ENCODE measurements at regions of chr16 and their contacts with region 1.

Region 1: DNA sequence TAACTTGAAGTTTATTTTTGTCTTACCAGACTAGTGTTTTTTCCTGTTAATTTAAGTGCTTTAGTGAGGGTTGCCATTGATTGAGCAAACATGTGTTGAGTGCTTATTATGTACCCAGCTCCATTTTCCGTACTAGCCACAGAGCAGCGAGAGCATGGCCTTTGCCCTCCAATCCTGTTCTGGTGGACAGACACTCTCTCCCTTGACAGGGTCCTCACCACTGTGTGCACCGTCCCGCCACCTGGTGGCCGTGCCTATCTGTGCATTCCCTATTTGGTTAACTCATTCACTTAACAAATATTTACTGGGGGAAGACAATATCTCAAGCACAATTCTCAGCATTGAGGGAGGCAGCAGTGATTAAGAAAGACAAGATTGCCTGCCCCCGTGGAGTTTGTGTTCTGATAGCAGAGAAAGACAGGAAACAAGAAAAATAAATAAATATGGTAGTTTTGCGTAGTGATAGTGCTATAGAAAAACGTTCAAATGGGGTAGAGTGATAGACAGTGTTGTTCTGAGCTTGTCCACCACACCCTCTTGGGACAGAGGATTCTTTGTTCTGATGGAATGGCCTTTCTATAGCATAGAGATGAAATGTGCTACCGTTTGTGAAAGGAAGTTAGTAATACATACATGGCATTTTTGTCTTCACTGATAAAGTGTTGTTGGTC is 13.0 kb downstream of the CDH13 start:
- DNase-seq: peak; percentile 54 to 77 (median 58)
- ATAC-seq: peak in 3 of 4 donors; percentile 62 to 72 (median 64)
- H3K4me3 ChIP-seq: no peak overlapping the region
- H3K27ac ChIP-seq: peak overlapping the region in 3 of 12 donors; percentile 1 to 62 (median 40)
- H3K4me1 ChIP-seq: peaks cover 0 to 61% (median 29%) of the 10 kb centered on the region in 12 donors
- H3K27me3 ChIP-seq: no peaks in the 10 kb centered on the region
- CTCF ChIP-seq: peak; percentile 59 to 86 (median 76)
- POLR2A ChIP-seq: no peak

Region 2: GRCh38 chr16:82300374-82300926 is 339.4 kb before region 1 on chr16:
- intact Hi-C with region 1: no loop called
- DNase-seq: no peak
- ATAC-seq: no peak
- H3K4me3 ChIP-seq: no peak overlapping the region
- H3K27ac ChIP-seq: no peak overlapping the region
- H3K4me1 ChIP-seq: peaks cover 0 to 17% (median 0%) of the 10 kb centered on the region in 12 donors
- H3K27me3 ChIP-seq: no peaks in the 10 kb centered on the region
- CTCF ChIP-seq: no peak
- POLR2A ChIP-seq: no peak

Region 3: DNA sequence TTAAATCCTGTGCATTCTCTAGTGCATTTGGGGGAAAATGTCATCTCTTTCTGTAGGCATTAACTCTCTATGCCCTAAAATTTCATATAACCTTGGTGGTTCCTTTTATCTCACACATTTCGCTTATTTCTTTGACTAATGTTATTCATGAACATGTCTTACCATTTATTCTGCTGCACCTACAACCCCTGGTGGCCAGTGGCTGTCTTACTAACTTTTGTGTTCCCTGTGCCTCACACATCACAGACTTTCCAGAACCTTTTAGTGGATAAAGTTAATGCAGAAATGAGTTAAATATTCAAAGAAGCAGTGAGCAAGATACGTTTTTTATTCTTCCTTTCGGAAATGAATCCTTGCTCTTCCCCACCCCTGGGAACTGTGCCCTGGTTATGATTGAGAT is 98.9 kb after region 1 on chr16:
- intact Hi-C with region 1: loop called in 4 of 10 experiments (anchors 2 to 10 kb)
- DNase-seq: peak in 1 of 5 donors; percentile 28
- ATAC-seq: no peak
- H3K4me3 ChIP-seq: no peak overlapping the region
- H3K27ac ChIP-seq: peak overlapping the region in 7 of 12 donors; percentile 22 to 90 (median 86)
- H3K4me1 ChIP-seq: peaks cover 8 to 51% (median 25%) of the 10 kb centered on the region in 12 donors
- H3K27me3 ChIP-seq: no peaks in the 10 kb centered on the region
- CTCF ChIP-seq: peak in 11 of 12 donors; percentile 15 to 56 (median 41)
- POLR2A ChIP-seq: no peak

Region 4: DNA sequence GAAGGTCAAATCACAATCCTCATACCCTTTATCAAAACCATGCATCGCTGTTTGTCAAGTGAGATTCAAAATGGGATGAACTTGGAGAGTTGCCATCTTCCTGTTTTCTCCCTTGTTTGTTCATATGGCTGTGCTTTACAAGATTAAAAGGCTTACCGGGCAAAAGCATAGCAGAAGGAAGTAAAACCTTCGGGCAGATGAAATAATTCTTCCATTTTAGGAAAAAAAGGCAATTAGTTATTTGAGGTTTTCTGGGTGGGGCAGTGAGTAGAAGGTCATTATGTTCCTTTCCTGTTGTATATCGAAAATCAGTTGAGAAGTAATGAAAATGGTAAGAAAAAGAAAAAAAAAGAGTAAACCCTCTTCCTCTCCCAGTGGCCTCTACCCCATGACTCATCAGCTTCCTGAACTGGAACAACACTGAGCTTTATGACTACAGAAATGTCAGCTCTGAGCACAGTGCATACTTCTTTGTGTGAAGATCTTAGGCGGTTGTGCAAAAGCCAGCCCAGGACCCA is 356.2 kb after region 1 on chr16:
- intact Hi-C with region 1: loop called in 1 of 10 experiments (anchors 10 kb)
- DNase-seq: peak in 2 of 5 donors; percentile 30 to 34
- ATAC-seq: peak in 3 of 4 donors; percentile 80 to 90 (median 86)
- H3K4me3 ChIP-seq: peak overlapping the region in 6 of 12 donors; percentile 9 to 31 (median 24)
- H3K27ac ChIP-seq: peak overlapping the region in 10 of 12 donors; percentile 2 to 78 (median 50)
- H3K4me1 ChIP-seq: peaks cover 0 to 17% (median 4%) of the 10 kb centered on the region in 12 donors
- H3K27me3 ChIP-seq: no peaks in the 10 kb centered on the region
- CTCF ChIP-seq: no peak
- POLR2A ChIP-seq: no peak

Region 5: GRCh38 chr16:83215406-83216001 is 575.7 kb after region 1 on chr16:
- intact Hi-C with region 1: loop called in 1 of 10 experiments (anchors 10 kb)
- DNase-seq: no peak
- ATAC-seq: no peak
- H3K4me3 ChIP-seq: no peak overlapping the region
- H3K27ac ChIP-seq: no peak overlapping the region
- H3K4me1 ChIP-seq: peaks cover 0 to 8% (median 0%) of the 10 kb centered on the region in 12 donors
- H3K27me3 ChIP-seq: no peaks in the 10 kb centered on the region
- CTCF ChIP-seq: peak; percentile 32 to 59 (median 49)
- POLR2A ChIP-seq: no peak

Region 6: GRCh38 chr16:83441517-83441916 is 801.7 kb after region 1 on chr16:
- intact Hi-C with region 1: loop called in 1 of 10 experiments (anchors 10 kb)
- DNase-seq: no peak
- ATAC-seq: peak in 2 of 4 donors; percentile 60 to 61
- H3K4me3 ChIP-seq: no peak overlapping the region
- H3K27ac ChIP-seq: no peak overlapping the region
- H3K4me1 ChIP-seq: no peaks in the 10 kb centered on the region
- H3K27me3 ChIP-seq: no peaks in the 10 kb centered on the region
- CTCF ChIP-seq: peak in 1 of 12 donors; percentile 12
- POLR2A ChIP-seq: no peak

Measured in heart left ventricle (tissue), 16 donors.